AG04450 (cell line): ENCODE measurements at regions of chr15 and their contacts with region 1.

Region 1: GRCh38 chr15:34059471-34059870 is 20.5 kb upstream of the AVEN start:
- DNase-seq: no peak
- H3K4me3 ChIP-seq: no peak overlapping the region
- H3K27ac ChIP-seq: no peak overlapping the region
- H3K27me3 ChIP-seq: no peaks in the 10 kb centered on the region
- CTCF ChIP-seq: no peak

Region 2: DNA sequence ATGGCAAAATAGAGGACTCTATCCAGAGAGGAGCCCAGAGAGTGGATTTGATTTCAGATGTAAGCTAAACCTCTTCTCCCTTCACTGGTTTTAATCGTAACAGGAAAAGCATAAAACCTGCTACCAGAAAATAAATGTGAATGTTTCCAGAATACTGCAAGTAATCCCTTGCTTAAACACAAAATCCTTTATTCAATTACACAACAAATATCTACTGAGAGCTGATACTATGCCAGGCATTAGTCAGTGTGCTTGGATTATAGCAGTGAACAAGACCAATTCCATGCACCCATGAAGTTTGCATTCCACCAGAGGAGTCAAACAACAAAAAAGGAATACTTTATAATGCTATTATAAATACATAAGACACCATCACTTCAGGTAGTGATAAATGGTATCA is 35.6 kb before region 1 on chr15:
- CTCF ChIA-PET with region 1: no interaction called
- POLR2A ChIA-PET with region 1: no interaction called
- DNase-seq: no peak
- H3K4me3 ChIP-seq: no peak overlapping the region
- H3K27ac ChIP-seq: no peak overlapping the region
- H3K27me3 ChIP-seq: no peaks in the 10 kb centered on the region
- CTCF ChIP-seq: no peak

Region 3: GRCh38 chr15:34038023-34038870 is 21.2 kb before region 1 on chr15:
- CTCF ChIA-PET with region 1: no interaction called
- POLR2A ChIA-PET with region 1: no interaction called
- DNase-seq: no peak
- H3K4me3 ChIP-seq: peak overlapping the region; percentile 95
- H3K27ac ChIP-seq: peak overlapping the region; percentile 78
- H3K27me3 ChIP-seq: no peaks in the 10 kb centered on the region
- CTCF ChIP-seq: no peak

Region 4: DNA sequence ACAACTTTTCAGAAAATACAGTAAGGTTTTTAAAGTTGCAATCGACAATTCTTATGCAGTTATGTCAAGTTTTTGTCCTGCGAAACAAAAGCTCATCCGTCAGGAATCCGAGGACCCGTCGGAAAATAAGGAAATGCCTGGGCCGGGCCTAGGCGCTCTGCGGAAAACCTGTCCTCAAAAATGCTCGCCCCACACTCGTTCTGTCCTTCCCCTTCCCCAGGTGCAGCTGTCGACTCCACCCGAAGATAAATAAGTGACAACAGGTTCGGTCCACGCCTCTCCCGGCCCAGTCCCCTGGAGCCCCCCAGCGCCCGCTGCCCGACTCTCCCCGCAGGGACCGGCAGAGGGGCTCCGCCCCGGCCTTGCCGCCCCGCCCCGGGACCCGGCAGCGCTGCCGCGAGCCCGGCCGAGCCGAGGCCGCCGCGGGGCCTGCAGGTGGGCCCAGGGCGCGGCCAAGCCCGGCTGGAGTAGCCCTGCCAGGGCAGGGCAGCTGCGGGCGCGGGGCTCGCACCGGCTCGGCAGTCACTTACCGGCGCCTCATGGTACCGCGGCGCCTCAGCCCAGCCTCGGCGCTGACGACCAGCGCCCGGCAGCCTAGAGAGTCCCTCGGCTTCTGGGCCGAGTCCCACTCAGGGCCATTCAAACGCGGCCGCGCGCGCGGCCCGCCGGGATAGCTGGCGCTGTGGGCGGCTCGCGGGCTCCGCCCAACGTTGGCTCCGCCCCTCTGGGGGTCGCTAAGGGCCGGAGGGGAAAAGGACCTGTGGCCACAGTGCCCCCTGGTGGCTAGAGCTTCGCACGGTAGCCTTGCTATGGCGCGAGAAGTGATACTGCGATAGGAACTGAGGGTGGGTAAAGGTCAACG is 150.2 kb after region 1 on chr15 and contains the start of gene KATNBL1:
- CTCF ChIA-PET with region 1: interaction called, 74 read pairs
- POLR2A ChIA-PET with region 1: no interaction called
- DNase-seq: peak; percentile 79
- H3K4me3 ChIP-seq: peak within 1 kb of the TSS; percentile 78
- H3K27ac ChIP-seq: peak within 1 kb of the TSS; percentile 90
- H3K27me3 ChIP-seq: peaks cover 4% of the 10 kb centered on the region
- CTCF ChIP-seq: peak; percentile 89
- polyA plus RNA-seq, gene KATNBL1: 25.2 and 46.6 TPM in 2 replicates